HepG2 (cell line): ENCODE measurements at regions of chr19 and their contacts with region 1.

Region 1: GRCh38 chr19:41515015-41515652 is 60.8 kb upstream of the CEACAM21 start:
- DNase-seq: no peak
- ATAC-seq: no peak; the same call in 2 of the 3 replicates
- H3K4me3 ChIP-seq: no peak overlapping the region
- H3K27ac ChIP-seq: no peak overlapping the region
- H3K4me1 ChIP-seq: peaks cover 12% of the 10 kb centered on the region
- H3K27me3 ChIP-seq: peaks cover 0 to 15% of the 10 kb centered on the region in 2 experiments; a peak in 2 of 5 replicates
- CTCF ChIP-seq: no peak
- EP300 ChIP-seq: no peak
- POLR2A ChIP-seq: no peak
- RAD21 ChIP-seq: no peak

Region 2: DNA sequence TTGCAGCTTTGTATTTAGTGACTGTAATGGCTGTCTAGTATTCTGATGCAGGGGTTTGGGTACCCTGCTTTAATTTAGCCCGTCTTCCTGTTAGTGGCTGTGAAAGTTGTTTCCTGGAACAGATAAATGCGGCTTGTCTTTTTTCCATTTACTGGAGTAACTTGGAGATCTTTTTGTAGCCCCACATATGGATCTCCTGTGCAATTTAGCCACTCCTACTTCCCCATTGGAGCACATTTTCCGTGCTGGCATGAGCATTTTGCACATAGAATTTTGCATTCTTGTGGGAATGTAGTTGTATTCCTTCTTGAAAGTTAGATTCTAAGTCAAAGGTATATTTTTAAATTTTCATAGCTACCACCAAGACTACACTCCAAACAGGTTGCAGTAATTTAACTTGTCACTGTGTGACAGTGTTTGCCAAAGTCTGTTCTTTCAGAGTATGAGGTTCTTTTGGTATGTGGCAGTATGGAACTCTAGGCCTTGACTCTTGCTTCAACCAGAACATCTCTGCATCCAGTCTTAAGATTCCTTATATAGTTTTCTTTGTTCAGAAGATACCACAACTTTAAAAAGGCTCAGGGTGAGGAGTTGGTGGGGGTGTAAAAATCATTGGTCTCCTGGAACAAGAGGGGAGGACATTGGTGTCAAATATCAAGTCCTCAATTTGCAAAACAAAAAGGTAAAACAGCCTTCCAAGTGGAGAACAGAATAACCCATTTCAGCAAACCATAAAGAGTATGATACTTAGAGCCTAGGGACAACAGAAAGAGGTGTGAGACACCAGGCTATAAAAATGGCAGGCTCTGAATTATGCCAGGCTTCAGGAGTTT is 226.2 kb before region 1 on chr19:
- CTCF ChIA-PET with region 1: no interaction called
- POLR2A ChIA-PET with region 1: no interaction called
- in situ Hi-C with region 1: no loop called
- intact Hi-C with region 1: no loop called
- DNase-seq: no peak
- ATAC-seq: no peak
- H3K4me3 ChIP-seq: no peak overlapping the region
- H3K27ac ChIP-seq: no peak overlapping the region
- H3K4me1 ChIP-seq: peaks cover 14% of the 10 kb centered on the region; the same call in 1 of the 2 replicates
- H3K27me3 ChIP-seq: no peaks in the 10 kb centered on the region
- CTCF ChIP-seq: no peak
- EP300 ChIP-seq: no peak
- POLR2A ChIP-seq: no peak
- RAD21 ChIP-seq: no peak

Region 3: GRCh38 chr19:41484822-41485221 is 30.3 kb before region 1 on chr19:
- CTCF ChIA-PET with region 1: no interaction called
- POLR2A ChIA-PET with region 1: no interaction called
- in situ Hi-C with region 1: no loop called
- intact Hi-C with region 1: loop called (anchors 1 kb)
- DNase-seq: no peak
- ATAC-seq: no peak
- H3K4me3 ChIP-seq: no peak overlapping the region
- H3K27ac ChIP-seq: no peak overlapping the region
- H3K4me1 ChIP-seq: no peaks in the 10 kb centered on the region
- H3K27me3 ChIP-seq: peaks cover 0 to 12% of the 10 kb centered on the region in 2 experiments; a peak in 4 of 5 replicates
- CTCF ChIP-seq: no peak
- EP300 ChIP-seq: no peak
- POLR2A ChIP-seq: no peak
- RAD21 ChIP-seq: no peak

Region 4: GRCh38 chr19:41626877-41627276 is 111.7 kb after region 1 on chr19 and contains the start of gene CEACAM4:
- CTCF ChIA-PET with region 1: no interaction called
- POLR2A ChIA-PET with region 1: no interaction called
- in situ Hi-C with region 1: no loop called
- intact Hi-C with region 1: no loop called
- DNase-seq: no peak
- ATAC-seq: no peak
- H3K4me3 ChIP-seq: no peak within 1 kb of the TSS
- H3K27ac ChIP-seq: no peak within 1 kb of the TSS
- H3K4me1 ChIP-seq: no peaks in the 10 kb centered on the region
- H3K27me3 ChIP-seq: peaks cover 0 to 3% of the 10 kb centered on the region in 2 experiments; a peak in 1 of 5 replicates
- CTCF ChIP-seq: no peak
- EP300 ChIP-seq: no peak
- POLR2A ChIP-seq: no peak
- RAD21 ChIP-seq: no peak
- total RNA-seq, gene CEACAM4: not detected in 2 replicates